Endothelial cell of umbilical vein (primary cell): ENCODE measurements at regions of chr3 and their contacts with region 1.

Region 1: DNA sequence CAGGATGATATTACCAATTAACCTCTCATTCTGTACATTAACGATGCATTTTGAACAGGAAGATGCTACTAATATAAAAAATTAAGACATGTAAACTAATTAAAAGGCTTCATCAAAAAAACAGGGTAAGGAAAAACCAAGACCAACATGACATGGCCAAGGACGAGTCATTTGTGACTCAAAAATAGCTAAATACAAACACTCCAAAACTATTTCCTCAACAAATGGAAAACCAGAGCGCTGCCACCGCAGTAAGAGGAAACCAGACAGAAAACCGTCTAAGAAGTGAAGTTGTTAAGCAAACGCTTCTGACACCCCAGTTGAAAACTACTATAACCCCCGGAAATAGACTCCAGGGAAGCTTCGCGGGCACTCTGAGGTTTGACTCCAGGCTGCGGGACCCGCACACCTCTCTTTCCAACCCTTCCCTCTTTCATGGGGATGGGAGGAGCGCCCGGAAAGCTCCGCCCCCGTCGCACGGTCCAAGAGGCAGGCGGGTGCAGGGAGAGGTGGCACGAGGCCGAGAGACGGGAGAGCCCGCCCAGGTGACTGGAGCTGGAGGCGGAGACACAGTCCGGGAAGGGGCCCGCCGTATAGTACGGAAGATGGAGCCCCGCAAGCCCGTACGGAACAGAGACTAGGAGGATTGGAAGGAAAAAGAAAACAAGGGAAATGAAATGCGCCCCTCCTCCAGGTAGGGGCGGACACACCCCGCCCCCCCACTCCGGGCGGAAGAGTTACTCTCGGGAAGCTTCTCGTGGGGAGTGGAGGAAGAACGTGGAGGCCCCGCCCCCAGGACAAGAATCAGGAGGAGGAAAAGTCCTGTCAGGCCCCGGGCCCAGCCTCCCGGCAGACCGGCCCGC is 708 bp downstream of the DCAF1 start:
- DNase-seq: peak; percentile 96
- H3K4me3 ChIP-seq: peak overlapping the region; percentile 66 to 97 (median 94)
- H3K27ac ChIP-seq: peak overlapping the region; percentile 63
- H3K4me1 ChIP-seq: peaks cover 8% of the 10 kb centered on the region
- H3K27me3 ChIP-seq: no peaks in the 10 kb centered on the region
- CTCF ChIP-seq: no peak
- POLR2A ChIP-seq: peak; percentile 4

Region 2: DNA sequence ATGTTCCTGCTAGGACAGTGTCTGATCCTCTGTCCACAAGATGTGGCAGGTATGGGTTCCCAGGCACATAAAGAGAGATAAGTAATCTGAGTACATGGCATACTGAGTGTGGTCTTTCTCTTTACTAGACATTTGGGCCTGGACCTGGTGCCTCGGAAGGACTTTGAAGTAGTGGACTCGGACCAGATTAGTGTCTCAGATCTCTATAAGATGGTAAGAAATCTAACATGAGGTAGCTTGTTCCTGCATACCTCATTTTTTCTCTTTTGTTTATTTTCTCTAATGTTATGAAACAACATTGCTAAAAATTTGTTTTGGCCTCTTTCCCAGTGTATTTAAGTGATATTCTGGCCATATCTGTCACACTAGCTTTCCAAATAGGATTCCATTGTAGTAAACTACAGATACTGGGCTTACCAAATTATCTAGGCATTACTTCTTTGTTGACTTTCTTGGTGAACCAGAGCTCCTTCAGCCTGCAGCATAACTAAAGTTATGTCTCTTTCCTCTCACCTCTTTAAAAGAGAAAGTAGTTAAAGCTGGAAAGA is 423.8 kb before region 1 on chr3:
- CTCF ChIA-PET with region 1: no interaction called
- POLR2A ChIA-PET with region 1: no interaction called
- dilution Hi-C with region 1: no loop called
- intact Hi-C with region 1: no loop called
- DNase-seq: no peak
- H3K4me3 ChIP-seq: no peak overlapping the region
- H3K27ac ChIP-seq: no peak overlapping the region
- H3K4me1 ChIP-seq: no peaks in the 10 kb centered on the region
- H3K27me3 ChIP-seq: no peaks in the 10 kb centered on the region
- CTCF ChIP-seq: no peak
- POLR2A ChIP-seq: no peak

Region 3: GRCh38 chr3:51362476-51362875 is 136.6 kb before region 1 on chr3:
- CTCF ChIA-PET with region 1: no interaction called
- POLR2A ChIA-PET with region 1: no interaction called
- dilution Hi-C with region 1: no loop called
- intact Hi-C with region 1: no loop called
- DNase-seq: no peak
- H3K4me3 ChIP-seq: no peak overlapping the region
- H3K27ac ChIP-seq: no peak overlapping the region
- H3K4me1 ChIP-seq: no peaks in the 10 kb centered on the region
- H3K27me3 ChIP-seq: no peaks in the 10 kb centered on the region
- CTCF ChIP-seq: no peak
- POLR2A ChIP-seq: no peak

Region 4: GRCh38 chr3:51434746-51435327 is 64.3 kb before region 1 on chr3:
- CTCF ChIA-PET with region 1: interaction called, 13 read pairs
- POLR2A ChIA-PET with region 1: no interaction called
- dilution Hi-C with region 1: no loop called
- intact Hi-C with region 1: no loop called
- DNase-seq: peak; percentile 62
- H3K4me3 ChIP-seq: no peak overlapping the region
- H3K27ac ChIP-seq: no peak overlapping the region
- H3K4me1 ChIP-seq: no peaks in the 10 kb centered on the region
- H3K27me3 ChIP-seq: no peaks in the 10 kb centered on the region
- CTCF ChIP-seq: peak; percentile 62 to 77
- POLR2A ChIP-seq: no peak

Region 5: DNA sequence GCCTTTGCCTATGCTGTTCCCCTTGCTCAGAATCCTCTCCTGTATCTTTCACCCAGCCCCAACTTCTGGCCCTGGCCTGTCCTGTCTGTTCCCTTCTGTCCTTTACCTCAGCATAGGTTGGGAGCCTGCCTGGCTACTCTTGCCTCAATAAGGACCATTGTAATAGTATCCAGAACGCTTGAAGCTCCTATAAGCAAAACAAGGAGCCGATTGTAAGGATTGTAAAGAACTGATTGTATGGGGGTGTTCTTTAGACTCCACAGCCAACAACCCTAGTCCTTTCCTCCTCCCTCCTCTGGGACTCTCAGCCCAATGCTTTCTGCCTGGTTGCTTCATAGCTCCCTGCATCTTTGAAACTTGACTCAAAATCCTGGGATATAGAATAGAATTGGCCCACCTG is 20.7 kb after region 1 on chr3:
- CTCF ChIA-PET with region 1: interaction called, 10 read pairs
- POLR2A ChIA-PET with region 1: interaction called, 4 read pairs
- dilution Hi-C with region 1: no loop called
- intact Hi-C with region 1: no loop called
- DNase-seq: no peak
- H3K4me3 ChIP-seq: no peak overlapping the region
- H3K27ac ChIP-seq: no peak overlapping the region
- H3K4me1 ChIP-seq: no peaks in the 10 kb centered on the region
- H3K27me3 ChIP-seq: peaks cover 0 to 5% of the 10 kb centered on the region in 2 experiments
- CTCF ChIP-seq: no peak
- POLR2A ChIP-seq: no peak

Region 6: GRCh38 chr3:51662456-51662855 is 163.3 kb after region 1 on chr3:
- CTCF ChIA-PET with region 1: interaction called, 230 read pairs
- POLR2A ChIA-PET with region 1: no interaction called
- dilution Hi-C with region 1: no loop called
- intact Hi-C with region 1: no loop called
- DNase-seq: no peak
- H3K4me3 ChIP-seq: no peak overlapping the region
- H3K27ac ChIP-seq: no peak overlapping the region
- H3K4me1 ChIP-seq: no peaks in the 10 kb centered on the region
- H3K27me3 ChIP-seq: no peaks in the 10 kb centered on the region
- CTCF ChIP-seq: no peak
- POLR2A ChIP-seq: no peak

Region 7: GRCh38 chr3:51718547-51719409 is 219.7 kb after region 1 on chr3:
- CTCF ChIA-PET with region 1: interaction called, 10 read pairs
- POLR2A ChIA-PET with region 1: no interaction called
- dilution Hi-C with region 1: no loop called
- intact Hi-C with region 1: no loop called
- DNase-seq: peak; percentile 30
- H3K4me3 ChIP-seq: no peak overlapping the region
- H3K27ac ChIP-seq: no peak overlapping the region
- H3K4me1 ChIP-seq: no peaks in the 10 kb centered on the region
- H3K27me3 ChIP-seq: no peaks in the 10 kb centered on the region
- CTCF ChIP-seq: peak; percentile 54 to 84
- POLR2A ChIP-seq: no peak